Panc1 (cell line): ENCODE measurements at regions of chr11 and their contacts with region 1.

Region 1: GRCh38 chr11:61637287-61637686 is 42.9 kb upstream of the DAGLA start:
- DNase-seq: no peak
- ATAC-seq: no peak
- H3K4me3 ChIP-seq: no peak overlapping the region
- H3K27ac ChIP-seq: no peak overlapping the region
- H3K4me1 ChIP-seq: no peaks in the 10 kb centered on the region
- H3K27me3 ChIP-seq: no peaks in the 10 kb centered on the region
- CTCF ChIP-seq: no peak

Region 2: GRCh38 chr11:61488651-61489291 is 148.5 kb before region 1 on chr11:
- CTCF ChIA-PET with region 1: interaction called, 14 read pairs
- POLR2A ChIA-PET with region 1: no interaction called
- in situ Hi-C with region 1: no loop called
- intact Hi-C with region 1: no loop called
- DNase-seq: no peak
- ATAC-seq: peak; percentile 77
- H3K4me3 ChIP-seq: peak overlapping the region; percentile 11 to 44
- H3K27ac ChIP-seq: peak overlapping the region; percentile 58
- H3K4me1 ChIP-seq: peaks cover 16% of the 10 kb centered on the region
- H3K27me3 ChIP-seq: no peaks in the 10 kb centered on the region
- CTCF ChIP-seq: no peak

Region 3: GRCh38 chr11:61526956-61527731 is 110.1 kb before region 1 on chr11:
- CTCF ChIA-PET with region 1: interaction called, 11 read pairs
- POLR2A ChIA-PET with region 1: no interaction called
- in situ Hi-C with region 1: no loop called
- intact Hi-C with region 1: no loop called
- DNase-seq: no peak
- ATAC-seq: no peak
- H3K4me3 ChIP-seq: no peak overlapping the region
- H3K27ac ChIP-seq: no peak overlapping the region
- H3K4me1 ChIP-seq: no peaks in the 10 kb centered on the region
- H3K27me3 ChIP-seq: no peaks in the 10 kb centered on the region
- CTCF ChIP-seq: no peak

Region 4: GRCh38 chr11:61587521-61588453 is 49.5 kb before region 1 on chr11:
- CTCF ChIA-PET with region 1: no interaction called
- POLR2A ChIA-PET with region 1: no interaction called
- in situ Hi-C with region 1: no loop called
- intact Hi-C with region 1: no loop called
- DNase-seq: no peak
- ATAC-seq: peak; percentile 79
- H3K4me3 ChIP-seq: peak overlapping the region; percentile 28 to 57
- H3K27ac ChIP-seq: no peak overlapping the region
- H3K4me1 ChIP-seq: no peaks in the 10 kb centered on the region; the same call in 1 of the 2 replicates
- H3K27me3 ChIP-seq: no peaks in the 10 kb centered on the region
- CTCF ChIP-seq: no peak